ENCODE measurements at regions of chr4 and their contacts with region 1.

Region 1: GRCh38 chr4:95165926-95166524 is 382.7 kb downstream of the UNC5C start:
- DNase-seq: no peak
- ATAC-seq: peak; percentile 70

Region 2: DNA sequence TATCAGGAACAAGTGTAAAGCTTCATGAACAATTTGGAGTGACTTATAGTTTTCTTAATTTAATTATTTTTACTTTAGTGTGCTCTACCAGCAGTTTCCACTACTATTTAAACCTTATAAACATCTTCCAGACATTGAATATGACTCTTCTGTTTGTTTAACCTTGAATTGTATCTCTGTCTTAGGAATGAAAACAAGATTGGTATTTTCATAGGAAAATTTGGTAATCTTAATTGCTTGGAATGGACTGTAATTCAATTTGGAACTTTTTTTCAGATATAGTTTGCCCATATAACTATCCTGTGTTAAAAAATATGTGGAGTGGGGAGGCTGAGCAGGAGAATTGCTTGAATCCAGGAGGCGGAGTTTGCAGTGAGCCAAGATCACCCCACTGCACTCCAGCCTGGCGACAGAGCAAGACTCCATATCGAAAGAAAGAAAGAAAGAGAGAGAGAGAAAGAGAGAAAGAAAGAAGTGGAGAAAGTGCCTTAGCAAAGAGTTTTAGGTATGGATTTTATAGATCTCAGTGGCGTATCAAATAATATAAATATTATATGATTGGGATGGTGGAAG is 165.9 kb before region 1 on chr4:
- intact Hi-C with region 1: no loop called
- DNase-seq: no peak
- ATAC-seq: no peak

Region 3: DNA sequence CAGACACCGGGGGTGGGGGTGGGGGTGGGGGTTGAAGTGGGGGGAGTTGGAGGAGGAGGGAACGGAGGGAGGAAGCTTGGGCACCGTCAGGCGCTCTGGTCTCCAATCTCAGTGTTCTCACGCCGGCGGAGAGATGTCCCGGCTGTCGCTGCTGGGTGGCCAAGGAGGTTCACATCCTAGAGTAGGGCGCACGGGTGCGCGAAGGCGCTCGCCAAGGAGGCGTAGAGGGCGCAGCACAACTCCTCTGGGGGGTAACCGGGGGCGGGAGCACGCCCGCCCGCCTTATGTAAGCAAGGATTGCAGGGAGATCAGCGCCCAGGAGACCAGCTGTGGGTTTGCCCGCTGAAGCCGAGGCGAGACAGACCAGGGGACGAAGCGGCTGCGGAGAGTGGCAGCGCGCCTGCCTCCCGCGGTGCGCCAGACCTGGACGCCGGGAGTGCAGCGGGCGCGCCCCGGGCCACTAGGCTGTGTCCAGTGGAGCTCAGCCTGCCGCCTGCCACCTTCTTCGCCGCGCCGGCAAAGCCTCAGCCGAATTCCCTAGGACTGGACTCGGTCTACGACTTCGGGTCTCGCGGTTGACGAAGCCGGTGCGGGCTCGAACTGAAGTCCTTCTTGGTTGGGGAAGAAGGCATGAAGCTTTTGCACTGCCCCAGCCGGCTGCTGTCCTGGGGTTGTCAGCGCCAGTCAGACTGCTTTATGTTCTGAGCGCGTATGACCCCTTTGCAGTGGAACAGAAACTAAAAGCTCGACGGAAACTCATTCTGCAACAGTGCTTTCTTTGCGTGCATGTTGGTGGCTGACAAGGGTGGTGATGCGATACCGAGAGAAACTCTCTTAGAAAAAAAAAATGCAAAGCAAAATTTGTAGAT is 383.5 kb after region 1 on chr4:
- intact Hi-C with region 1: loop called (anchors 10 kb)
- DNase-seq: peak; percentile 84
- ATAC-seq: peak; percentile 79

Region 4: GRCh38 chr4:96035727-96036126 is 869.7 kb after region 1 on chr4:
- intact Hi-C with region 1: loop called (anchors 5 kb)
- DNase-seq: no peak
- ATAC-seq: no peak